ENCODE measurements at regions of chr15 and their contacts with region 1.

Region 1: GRCh38 chr15:40893733-40894688 is at the start of gene VPS18:
- DNase-seq: peak; percentile 97 to 99 (median 98)
- ATAC-seq: peak; percentile 96 to 97
- H3K4me3 Mint-ChIP-seq: peak within 1 kb of the TSS; percentile 95 to 100 (median 99)
- H3K27ac Mint-ChIP-seq: peak within 1 kb of the TSS; percentile 84 to 98 (median 97)
- H3K4me1 Mint-ChIP-seq: peaks cover 18 to 44% (median 38%) of the 10 kb centered on the region in 4 donors
- H3K27me3 Mint-ChIP-seq: no peaks in the 10 kb centered on the region
- polyA plus RNA-seq, gene VPS18: 11.1 to 19.2 (median 15.0) TPM

Region 2: GRCh38 chr15:40857601-40858341 is 36.2 kb before region 1 on chr15:
- POLR2A ChIA-PET with region 1: interaction called, 49 read pairs
- DNase-seq: peak; percentile 63 to 84 (median 78)
- ATAC-seq: peak; percentile 88 to 94
- H3K4me3 Mint-ChIP-seq: no peak overlapping the region
- H3K27ac Mint-ChIP-seq: peak overlapping the region in 2 of 10 donors; percentile 3 to 29
- H3K4me1 Mint-ChIP-seq: peaks cover 6 to 15% (median 11%) of the 10 kb centered on the region in 4 donors
- H3K27me3 Mint-ChIP-seq: peaks cover 0 to 4% (median 0%) of the 10 kb centered on the region in 5 donors

Region 3: DNA sequence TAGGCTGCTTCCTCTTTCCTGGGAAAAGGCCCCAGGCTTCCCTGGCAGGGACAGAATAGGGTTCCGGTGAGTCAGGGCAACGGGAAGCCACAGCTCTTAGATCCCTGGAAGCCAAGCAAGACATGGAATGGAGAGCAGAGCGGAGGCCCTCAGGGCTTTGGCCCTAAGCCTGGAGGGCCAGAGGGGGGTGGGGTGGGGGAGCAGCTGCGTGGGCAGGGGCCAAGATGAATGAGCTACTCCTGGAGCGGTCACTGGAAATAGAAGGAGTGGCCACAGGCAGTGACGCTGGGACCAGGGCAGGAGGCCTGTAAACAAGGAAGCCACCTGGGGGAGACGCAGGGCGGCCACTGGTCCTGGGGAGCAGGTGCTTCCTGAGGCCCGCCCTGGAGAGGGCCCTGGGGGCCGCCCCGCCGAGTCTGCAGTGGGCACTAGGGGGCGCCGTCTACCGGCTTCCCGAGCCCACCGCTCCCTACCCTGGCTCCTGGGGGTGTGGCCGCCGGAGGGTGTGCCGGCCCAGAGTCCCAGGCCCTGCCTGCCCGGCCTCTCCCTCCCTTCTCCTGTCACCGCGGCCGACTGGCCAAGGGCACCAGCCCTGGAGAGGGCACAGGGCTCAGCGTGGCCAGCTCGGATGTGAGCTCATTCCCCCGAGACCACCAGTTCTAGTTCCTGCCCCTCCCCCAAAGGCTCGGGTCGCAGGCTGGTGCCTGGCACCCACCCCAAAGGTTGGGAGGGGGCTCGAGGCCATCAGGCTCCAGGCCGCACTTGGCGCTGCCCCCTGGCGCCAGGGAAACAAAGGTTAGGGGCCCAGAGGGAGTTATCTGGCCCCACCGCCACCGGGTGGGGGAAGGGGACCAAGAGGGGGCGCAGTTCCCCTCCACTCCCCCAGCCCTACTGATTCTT is 12.3 kb after region 1 on chr15:
- POLR2A ChIA-PET with region 1: interaction called, 13 read pairs
- DNase-seq: peak; percentile 65 to 84 (median 77)
- ATAC-seq: peak; percentile 66 to 75
- H3K4me3 Mint-ChIP-seq: peak overlapping the region; percentile 79 to 93 (median 86)
- H3K27ac Mint-ChIP-seq: peak overlapping the region; percentile 13 to 95 (median 91)
- H3K4me1 Mint-ChIP-seq: peaks cover 12 to 46% (median 43%) of the 10 kb centered on the region in 4 donors
- H3K27me3 Mint-ChIP-seq: no peaks in the 10 kb centered on the region

Region 4: DNA sequence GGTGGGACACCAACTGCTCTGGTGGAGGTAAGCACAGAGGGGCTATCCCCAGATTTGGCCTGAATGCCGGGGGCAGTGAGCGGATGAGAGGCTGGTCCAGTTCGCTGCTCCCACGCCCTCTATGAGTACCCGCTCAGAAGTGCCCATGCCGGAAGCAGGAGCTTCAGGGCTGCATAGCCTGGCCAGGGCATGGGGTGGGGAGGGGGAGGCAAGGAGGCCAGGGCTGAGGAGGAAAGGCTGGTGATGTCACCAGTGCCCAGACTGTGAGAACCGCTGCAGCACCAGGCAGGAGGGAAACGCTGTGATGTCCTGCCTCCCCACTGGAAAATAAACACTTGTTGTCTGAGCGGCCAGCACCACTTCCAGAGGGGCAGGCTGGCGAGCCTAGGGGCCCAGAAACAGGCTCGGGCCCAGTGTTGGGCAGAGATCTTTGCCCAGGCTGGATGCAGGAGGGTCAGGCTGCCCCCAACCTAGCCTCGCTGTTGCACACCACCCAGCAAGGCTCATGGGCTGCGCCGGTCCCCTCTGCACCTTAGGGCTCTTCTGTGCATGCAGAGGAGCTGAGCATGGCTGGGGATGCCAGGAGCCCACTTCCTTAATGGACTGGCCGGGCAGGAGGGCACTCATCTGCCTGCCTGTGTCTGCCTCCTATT is 24.3 kb after region 1 on chr15:
- POLR2A ChIA-PET with region 1: no interaction called
- DNase-seq: no peak
- ATAC-seq: no peak
- H3K4me3 Mint-ChIP-seq: no peak overlapping the region
- H3K27ac Mint-ChIP-seq: no peak overlapping the region
- H3K4me1 Mint-ChIP-seq: peaks cover 0 to 9% (median 0%) of the 10 kb centered on the region in 4 donors
- H3K27me3 Mint-ChIP-seq: peaks cover 0 to 3% (median 0%) of the 10 kb centered on the region in 5 donors

Region 5: GRCh38 chr15:41011055-41011815 is 117.2 kb after region 1 on chr15:
- POLR2A ChIA-PET with region 1: no interaction called
- DNase-seq: no peak
- ATAC-seq: no peak
- H3K4me3 Mint-ChIP-seq: no peak overlapping the region
- H3K27ac Mint-ChIP-seq: peak overlapping the region in 1 of 10 donors; percentile 83
- H3K4me1 Mint-ChIP-seq: peaks cover 3 to 17% (median 6%) of the 10 kb centered on the region in 4 donors
- H3K27me3 Mint-ChIP-seq: no peaks in the 10 kb centered on the region

Region 6: DNA sequence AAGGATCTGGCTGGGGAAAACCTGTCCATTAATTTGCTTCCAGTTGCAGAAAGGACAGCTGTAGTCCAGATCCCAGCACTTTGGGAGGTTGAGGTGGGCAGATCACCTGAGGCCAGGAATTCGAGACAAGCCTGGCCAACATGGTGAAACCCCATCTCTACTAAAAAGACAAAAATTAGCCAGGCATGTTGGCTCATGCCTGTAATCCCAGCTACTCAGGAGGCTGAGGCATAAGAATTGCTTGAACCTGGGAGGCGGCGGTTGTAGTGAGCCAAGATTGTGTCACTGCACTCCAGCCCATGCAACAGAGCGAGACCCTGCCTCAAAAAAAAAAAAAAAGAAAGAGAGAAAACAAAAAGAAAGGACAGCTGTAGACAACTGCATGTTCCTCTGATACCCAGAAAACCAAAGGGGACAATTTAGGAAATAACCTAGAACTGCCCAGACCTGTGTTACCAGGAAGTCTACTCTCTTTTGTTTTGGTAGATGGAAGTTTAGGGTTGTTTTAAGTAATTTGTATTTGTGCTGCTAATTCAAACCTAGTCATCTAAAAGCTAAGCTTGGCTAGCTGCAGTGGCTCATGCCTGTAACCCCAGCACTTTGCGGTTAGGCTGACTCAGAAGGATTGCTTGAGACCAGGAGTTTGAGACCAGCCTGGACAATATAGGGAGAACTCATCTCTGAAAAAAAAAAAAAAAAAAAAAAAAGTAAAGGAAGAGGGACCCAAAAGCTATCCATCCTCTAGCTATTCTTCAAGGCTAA is 313.9 kb after region 1 on chr15:
- POLR2A ChIA-PET with region 1: no interaction called
- DNase-seq: no peak
- ATAC-seq: no peak
- H3K4me3 Mint-ChIP-seq: no peak overlapping the region
- H3K27ac Mint-ChIP-seq: no peak overlapping the region
- H3K4me1 Mint-ChIP-seq: peaks cover 0 to 1% (median 0%) of the 10 kb centered on the region in 4 donors
- H3K27me3 Mint-ChIP-seq: peaks cover 0 to 7% (median 0%) of the 10 kb centered on the region in 5 donors

Measured in naive thymus-derived CD8-positive, alpha-beta T cell (primary cell).